ENCODE measurements at regions of chr19 and their contacts with region 1.

Region 1: GRCh38 chr19:47243776-47244547 is 12.4 kb upstream of the CCDC9 start:
- DNase-seq: peak; percentile 100
- H3K4me3 ChIP-seq: no peak overlapping the region
- H3K27ac ChIP-seq: peak overlapping the region; percentile 49
- H3K4me1 ChIP-seq: peaks cover 20% of the 10 kb centered on the region
- H3K27me3 ChIP-seq: no peaks in the 10 kb centered on the region
- CTCF ChIP-seq: peak; percentile 95 to 99
- POLR2A ChIP-seq: peak; percentile 53

Region 2: GRCh38 chr19:47035127-47036096 is 208.6 kb before region 1 on chr19:
- CTCF ChIA-PET with region 1: interaction called, 9 read pairs
- POLR2A ChIA-PET with region 1: no interaction called
- dilution Hi-C with region 1: no loop called
- intact Hi-C with region 1: loop called (anchors 5 kb)
- DNase-seq: peak; percentile 92
- H3K4me3 ChIP-seq: peak overlapping the region; percentile 32 to 75 (median 73)
- H3K27ac ChIP-seq: no peak overlapping the region
- H3K4me1 ChIP-seq: peaks cover 8% of the 10 kb centered on the region
- H3K27me3 ChIP-seq: peaks cover 0 to 2% of the 10 kb centered on the region in 2 experiments
- CTCF ChIP-seq: peak; percentile 84 to 94
- POLR2A ChIP-seq: no peak

Region 3: DNA sequence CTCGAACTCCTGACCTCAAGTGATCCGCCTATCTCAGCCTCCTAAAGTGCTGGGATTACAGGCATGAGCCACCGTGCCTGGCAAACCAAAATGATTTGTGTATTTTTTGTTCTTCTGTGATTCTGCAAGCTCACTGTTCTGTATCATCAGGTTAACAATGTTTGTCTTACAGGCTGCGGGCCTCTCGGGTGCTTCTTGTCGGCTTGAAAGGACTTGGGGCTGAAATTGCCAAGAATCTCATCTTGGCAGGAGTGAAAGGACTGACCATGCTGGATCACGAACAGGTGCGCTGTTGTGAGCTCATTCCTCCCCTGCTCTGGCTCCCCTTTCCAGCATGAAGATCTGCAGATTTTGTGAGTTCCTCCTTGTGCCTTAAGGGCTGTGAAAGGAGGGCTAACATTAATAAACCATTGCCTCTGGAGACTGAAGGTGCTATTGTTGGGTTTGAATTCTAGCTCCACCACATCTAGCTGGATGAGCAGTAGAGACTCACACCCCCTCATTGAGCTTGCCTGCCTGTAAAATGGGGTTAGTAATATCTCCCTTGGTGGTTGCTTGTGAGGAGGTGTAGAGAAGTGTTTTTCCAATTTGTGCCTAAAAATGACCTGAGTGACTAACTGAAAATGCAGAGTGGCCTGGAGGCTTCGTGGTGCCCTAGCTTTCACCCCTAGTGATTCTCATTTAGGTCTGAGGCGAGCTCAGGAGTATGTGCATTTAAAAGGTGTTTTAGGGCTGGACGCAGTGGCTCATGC is 100.5 kb before region 1 on chr19:
- CTCF ChIA-PET with region 1: interaction called, 223 read pairs
- POLR2A ChIA-PET with region 1: interaction called, 18 read pairs
- dilution Hi-C with region 1: no loop called
- intact Hi-C with region 1: no loop called
- DNase-seq: no peak
- H3K4me3 ChIP-seq: no peak overlapping the region
- H3K27ac ChIP-seq: no peak overlapping the region
- H3K4me1 ChIP-seq: no peaks in the 10 kb centered on the region
- H3K27me3 ChIP-seq: no peaks in the 10 kb centered on the region
- CTCF ChIP-seq: no peak
- POLR2A ChIP-seq: no peak

Region 4: DNA sequence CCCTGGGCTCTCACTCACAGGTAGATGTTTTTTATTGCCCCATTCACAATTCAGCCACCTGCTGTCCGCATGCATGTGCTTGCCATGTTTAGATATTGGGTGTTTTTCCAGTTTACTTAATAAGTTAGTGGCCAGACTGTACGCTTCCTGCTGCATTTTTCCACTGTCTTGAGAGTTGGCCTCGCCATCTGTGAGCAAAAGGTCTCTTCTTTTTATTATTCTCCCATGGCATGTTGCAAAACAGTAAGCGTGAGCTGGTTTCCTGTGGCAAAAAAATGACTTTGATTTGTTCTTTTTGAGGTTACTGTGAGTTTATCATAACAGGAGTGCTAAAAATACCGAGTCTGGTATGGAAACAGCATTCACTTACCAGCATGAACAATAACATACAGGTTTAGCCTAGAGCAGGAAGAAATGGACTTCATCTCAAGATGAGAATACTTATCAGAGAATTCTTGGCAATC is 67.3 kb before region 1 on chr19:
- CTCF ChIA-PET with region 1: interaction called, 21 read pairs
- POLR2A ChIA-PET with region 1: interaction called, 4 read pairs
- dilution Hi-C with region 1: no loop called
- intact Hi-C with region 1: loop called (anchors 1 kb)
- DNase-seq: peak; percentile 100
- H3K4me3 ChIP-seq: peak overlapping the region in 1 of 3 experiments; percentile 15
- H3K27ac ChIP-seq: peak overlapping the region; percentile 97
- H3K4me1 ChIP-seq: peaks cover 49% of the 10 kb centered on the region
- H3K27me3 ChIP-seq: no peaks in the 10 kb centered on the region
- CTCF ChIP-seq: no peak
- POLR2A ChIP-seq: no peak

Region 5: DNA sequence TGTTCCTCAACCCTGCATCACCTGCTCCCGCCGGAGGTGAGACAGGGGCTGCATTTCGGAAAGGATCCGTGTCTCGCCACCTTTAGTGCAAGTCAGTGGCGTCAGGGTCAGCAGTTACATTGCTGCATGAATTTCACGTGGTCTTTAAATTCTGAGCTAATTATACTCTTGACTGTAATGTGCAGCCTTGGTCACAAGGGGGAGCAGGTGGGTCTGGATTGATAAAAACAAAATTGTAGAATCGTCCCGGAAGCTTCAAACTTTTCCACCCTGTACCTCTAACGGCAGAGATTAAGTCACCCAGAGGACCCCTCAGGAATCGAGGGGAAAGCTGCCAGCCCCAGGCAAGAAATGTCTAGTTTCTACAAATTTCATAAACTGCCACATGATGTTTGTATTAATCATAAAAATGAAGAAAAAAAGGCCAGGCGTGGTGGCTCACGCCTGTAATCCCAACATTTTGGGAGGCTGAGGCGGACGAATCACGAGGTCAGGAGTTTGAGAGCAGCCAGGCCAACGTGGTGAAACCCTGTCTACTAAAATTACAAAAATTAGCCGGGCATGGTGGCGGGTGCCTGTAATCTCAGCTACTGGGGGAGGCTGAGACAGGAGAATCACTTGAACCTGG is 33.2 kb before region 1 on chr19:
- CTCF ChIA-PET with region 1: interaction called, 533 read pairs
- POLR2A ChIA-PET with region 1: interaction called, 16 read pairs
- dilution Hi-C with region 1: no loop called
- intact Hi-C with region 1: loop called (anchors 1 kb)
- DNase-seq: peak; percentile 91
- H3K4me3 ChIP-seq: no peak overlapping the region
- H3K27ac ChIP-seq: peak overlapping the region; percentile 75
- H3K4me1 ChIP-seq: peaks cover 8% of the 10 kb centered on the region
- H3K27me3 ChIP-seq: no peaks in the 10 kb centered on the region
- CTCF ChIP-seq: peak; percentile 69 to 85
- POLR2A ChIP-seq: no peak

Region 6: GRCh38 chr19:47256688-47257443 is 12.9 kb after region 1 on chr19:
- CTCF ChIA-PET with region 1: interaction called, 49 read pairs
- POLR2A ChIA-PET with region 1: interaction called, 9 read pairs
- dilution Hi-C with region 1: no loop called
- intact Hi-C with region 1: loop called (anchors 1 kb)
- DNase-seq: peak; percentile 99
- H3K4me3 ChIP-seq: peak overlapping the region in 2 of 3 experiments; percentile 34 to 73
- H3K27ac ChIP-seq: peak overlapping the region; percentile 96
- H3K4me1 ChIP-seq: peaks cover 11% of the 10 kb centered on the region
- H3K27me3 ChIP-seq: no peaks in the 10 kb centered on the region
- CTCF ChIP-seq: no peak
- POLR2A ChIP-seq: no peak

Region 7: GRCh38 chr19:47573071-47574026 is 329.4 kb after region 1 on chr19 and contains the start of gene ZNF541:
- CTCF ChIA-PET with region 1: no interaction called
- POLR2A ChIA-PET with region 1: no interaction called
- dilution Hi-C with region 1: no loop called
- intact Hi-C with region 1: no loop called
- DNase-seq: peak; percentile 40
- H3K4me3 ChIP-seq: peak within 1 kb of the TSS in 1 of 3 experiments; percentile 36
- H3K27ac ChIP-seq: no peak within 1 kb of the TSS
- H3K4me1 ChIP-seq: no peaks in the 10 kb centered on the region
- H3K27me3 ChIP-seq: peaks cover 2 to 11% of the 10 kb centered on the region in 2 experiments
- CTCF ChIP-seq: no peak
- POLR2A ChIP-seq: no peak
- total RNA-seq, gene ZNF541: 0.13 TPM in 1 of 2 replicates, not detected in the other

Measured in endothelial cell of umbilical vein (primary cell).